HepG2 (cell line): ENCODE measurements at regions of chr13 and their contacts with region 1.

Region 1: DNA sequence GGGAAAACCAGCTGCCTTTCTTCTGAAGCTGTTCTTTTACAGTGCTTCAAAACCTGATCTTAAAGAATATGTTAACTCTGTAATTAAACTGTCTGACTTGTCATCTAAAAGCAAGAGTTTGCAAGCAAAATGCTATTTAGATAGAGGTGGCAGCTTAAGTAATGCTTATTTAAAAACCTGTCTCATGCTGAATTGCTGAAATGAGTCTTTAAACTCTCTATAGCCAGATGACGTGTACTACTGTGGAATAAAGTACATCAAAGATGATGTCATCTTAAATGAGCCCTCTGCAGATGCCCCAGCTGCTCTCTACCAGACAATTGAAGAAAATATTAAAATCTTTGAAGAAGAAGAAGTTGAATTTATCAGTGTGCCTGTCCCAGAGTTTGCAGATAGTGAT is 22.9 kb downstream of the ITM2B start:
- DNase-seq: no peak
- ATAC-seq: no peak
- H3K4me3 ChIP-seq: no peak overlapping the region
- H3K27ac ChIP-seq: no peak overlapping the region
- H3K4me1 ChIP-seq: peaks cover 64% of the 10 kb centered on the region
- H3K27me3 ChIP-seq: no peaks in the 10 kb centered on the region
- CTCF ChIP-seq: no peak
- EP300 ChIP-seq: no peak
- POLR2A ChIP-seq: no peak
- RAD21 ChIP-seq: no peak

Region 2: DNA sequence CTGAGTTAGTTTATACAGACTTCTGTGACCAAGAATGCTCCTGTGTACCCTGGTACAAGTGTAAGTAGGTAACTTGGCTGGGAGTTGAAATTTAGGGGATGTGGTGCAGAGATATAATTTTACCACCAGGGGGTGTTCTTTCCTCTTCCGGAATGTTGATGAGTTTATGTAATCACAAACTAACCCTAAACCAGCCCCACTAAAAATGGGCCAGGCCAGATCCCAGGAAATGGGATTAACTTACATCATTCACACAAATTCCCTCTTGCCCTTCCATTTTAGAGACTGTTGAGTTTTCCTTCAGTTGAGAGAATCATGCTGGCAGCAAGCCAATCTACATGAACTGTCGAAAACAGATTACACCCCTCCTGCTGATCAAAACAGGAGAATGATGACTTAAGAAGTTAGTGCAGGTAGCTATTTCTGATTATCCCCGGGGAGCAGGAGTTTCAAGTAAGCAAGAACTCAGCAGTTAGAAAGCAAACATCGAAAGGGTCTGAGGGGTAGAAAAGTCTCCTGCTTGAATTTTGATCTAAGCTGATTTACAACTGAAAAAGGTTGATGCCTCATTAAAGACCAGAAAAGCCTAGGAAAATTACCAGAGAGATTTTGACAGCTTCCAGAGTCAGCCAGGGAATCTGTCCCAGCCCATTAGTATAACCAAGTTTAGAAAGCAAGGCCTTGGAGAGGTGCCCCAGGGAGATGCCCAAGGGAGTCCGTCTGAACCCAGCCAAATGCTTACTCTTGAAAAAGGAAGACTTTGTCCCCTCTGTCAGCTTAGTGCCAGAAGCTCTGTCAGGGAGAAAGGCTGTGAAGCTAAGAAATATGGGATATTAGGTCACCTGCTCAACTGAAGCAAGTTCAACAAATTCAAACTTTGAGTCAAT is 128.8 kb before region 1 on chr13:
- CTCF ChIA-PET with region 1: no interaction called
- POLR2A ChIA-PET with region 1: no interaction called
- in situ Hi-C with region 1: no loop called
- intact Hi-C with region 1: loop called (anchors 2 kb)
- DNase-seq: peak; percentile 63
- ATAC-seq: peak; percentile 73
- H3K4me3 ChIP-seq: peak overlapping the region in 1 of 3 experiments; percentile 27; a peak in 1 of 6 replicates
- H3K27ac ChIP-seq: no peak overlapping the region
- H3K4me1 ChIP-seq: peaks cover 53% of the 10 kb centered on the region
- H3K27me3 ChIP-seq: no peaks in the 10 kb centered on the region
- CTCF ChIP-seq: peak; percentile 74
- EP300 ChIP-seq: no peak
- POLR2A ChIP-seq: no peak
- RAD21 ChIP-seq: no peak

Region 3: GRCh38 chr13:48266701-48267639 is 11.0 kb after region 1 on chr13:
- CTCF ChIA-PET with region 1: no interaction called
- POLR2A ChIA-PET with region 1: no interaction called
- in situ Hi-C with region 1: no loop called
- intact Hi-C with region 1: no loop called
- DNase-seq: no peak
- ATAC-seq: no peak
- H3K4me3 ChIP-seq: no peak overlapping the region
- H3K27ac ChIP-seq: no peak overlapping the region
- H3K4me1 ChIP-seq: no peaks in the 10 kb centered on the region
- H3K27me3 ChIP-seq: no peaks in the 10 kb centered on the region
- CTCF ChIP-seq: no peak
- EP300 ChIP-seq: no peak
- POLR2A ChIP-seq: no peak
- RAD21 ChIP-seq: no peak